ENCODE measurements at regions of chr1 and their contacts with region 1.

Region 1: GRCh38 chr1:7680207-7680954 is 90.7 kb upstream of the VAMP3 start:
- DNase-seq: peak in 1 of 2 experiments; percentile 57
- H3K4me3 ChIP-seq: peak overlapping the region; percentile 76
- H3K4me3 Mint-ChIP-seq: peak overlapping the region; percentile 71
- H3K27ac Mint-ChIP-seq: no peak overlapping the region
- H3K4me1 ChIP-seq: no peaks in the 10 kb centered on the region
- H3K4me1 Mint-ChIP-seq: no peaks in the 10 kb centered on the region
- H3K27me3 ChIP-seq: no peaks in the 10 kb centered on the region
- H3K27me3 Mint-ChIP-seq: peaks cover 4% of the 10 kb centered on the region
- CTCF ChIP-seq: no peak

Region 2: DNA sequence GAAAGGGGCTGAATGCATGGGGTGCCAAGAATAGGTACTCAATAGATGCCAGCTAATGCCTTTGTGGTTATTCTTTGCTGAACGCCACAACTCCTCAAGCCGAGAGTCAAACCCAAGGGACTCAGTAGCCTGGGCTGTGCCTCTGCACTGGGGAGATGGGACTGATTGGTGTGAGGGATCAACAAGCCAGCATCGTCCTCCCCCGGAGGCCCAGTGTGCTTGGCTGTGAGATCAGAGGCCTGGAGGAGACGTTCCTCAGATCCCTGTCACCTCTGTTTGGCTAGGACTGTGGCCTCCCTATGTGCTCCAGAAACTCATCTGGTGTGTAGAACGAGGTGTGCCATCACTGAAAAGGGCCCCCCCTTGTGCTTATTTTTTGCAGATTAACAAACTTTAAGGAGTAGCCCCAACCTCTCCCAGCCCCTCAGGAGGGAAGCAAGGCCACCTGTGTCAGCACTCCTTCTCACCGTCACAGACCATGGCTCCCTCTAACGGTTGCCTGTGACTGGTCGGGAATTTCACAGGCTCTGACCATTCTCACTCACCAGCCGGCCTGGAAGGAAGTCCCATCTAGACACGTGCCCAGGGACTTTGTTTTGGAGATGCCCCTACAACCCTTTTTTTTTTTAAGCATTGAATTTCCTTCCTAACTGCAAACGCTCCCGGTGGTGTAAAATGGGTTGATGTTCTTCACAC is 103.3 kb before region 1 on chr1:
- CTCF ChIA-PET with region 1: no interaction called
- POLR2A ChIA-PET with region 1: no interaction called
- intact Hi-C with region 1: no loop called
- DNase-seq: no peak
- H3K4me3 ChIP-seq: no peak overlapping the region
- H3K4me3 Mint-ChIP-seq: no peak overlapping the region
- H3K27ac Mint-ChIP-seq: no peak overlapping the region
- H3K4me1 ChIP-seq: no peaks in the 10 kb centered on the region
- H3K4me1 Mint-ChIP-seq: no peaks in the 10 kb centered on the region
- H3K27me3 ChIP-seq: no peaks in the 10 kb centered on the region
- H3K27me3 Mint-ChIP-seq: peaks cover 9% of the 10 kb centered on the region
- CTCF ChIP-seq: peak in 1 of 2 experiments; percentile 18

Region 3: DNA sequence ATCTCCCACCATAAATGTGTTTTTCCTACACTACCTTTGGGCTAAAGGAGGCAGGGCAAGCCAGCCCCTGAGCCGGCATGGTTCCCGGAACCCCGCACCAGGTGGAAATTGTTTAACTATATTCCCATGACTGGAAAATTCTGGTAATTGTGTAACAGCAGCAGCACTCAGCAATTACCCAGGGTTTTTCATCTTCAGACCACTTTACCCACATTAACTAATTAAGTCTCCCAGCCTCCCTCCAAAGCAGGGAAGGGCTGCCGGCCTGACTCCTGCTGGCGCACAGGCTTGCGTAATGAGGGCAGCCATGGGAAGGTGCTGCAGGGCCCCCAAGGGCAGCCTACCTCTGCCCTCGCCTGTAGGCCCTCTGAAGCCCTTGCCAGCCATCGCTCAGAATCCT is 50.0 kb before region 1 on chr1:
- CTCF ChIA-PET with region 1: no interaction called
- POLR2A ChIA-PET with region 1: no interaction called
- intact Hi-C with region 1: no loop called
- DNase-seq: no peak
- H3K4me3 ChIP-seq: no peak overlapping the region
- H3K4me3 Mint-ChIP-seq: no peak overlapping the region
- H3K27ac Mint-ChIP-seq: no peak overlapping the region
- H3K4me1 ChIP-seq: no peaks in the 10 kb centered on the region
- H3K4me1 Mint-ChIP-seq: no peaks in the 10 kb centered on the region
- H3K27me3 ChIP-seq: no peaks in the 10 kb centered on the region; the same call in none of the 2 replicates
- H3K27me3 Mint-ChIP-seq: peaks cover 45% of the 10 kb centered on the region
- CTCF ChIP-seq: no peak

Region 4: GRCh38 chr1:7704214-7705047 is 24.1 kb after region 1 on chr1:
- CTCF ChIA-PET with region 1: no interaction called
- POLR2A ChIA-PET with region 1: interaction called, 4 read pairs
- intact Hi-C with region 1: loop called (anchors 2 kb)
- DNase-seq: peak; percentile 92 to 97
- H3K4me3 ChIP-seq: peak overlapping the region; percentile 73
- H3K4me3 Mint-ChIP-seq: peak overlapping the region; percentile 69
- H3K27ac Mint-ChIP-seq: no peak overlapping the region
- H3K4me1 ChIP-seq: no peaks in the 10 kb centered on the region
- H3K4me1 Mint-ChIP-seq: peaks cover 13% of the 10 kb centered on the region
- H3K27me3 ChIP-seq: no peaks in the 10 kb centered on the region
- H3K27me3 Mint-ChIP-seq: no peaks in the 10 kb centered on the region
- CTCF ChIP-seq: no peak

Region 5: GRCh38 chr1:7752512-7753417 is 72.4 kb after region 1 on chr1:
- CTCF ChIA-PET with region 1: interaction called, 17 read pairs
- POLR2A ChIA-PET with region 1: no interaction called
- intact Hi-C with region 1: no loop called
- DNase-seq: peak; percentile 43 to 62
- H3K4me3 ChIP-seq: peak overlapping the region; percentile 21; the same call in 1 of the 2 replicates
- H3K4me3 Mint-ChIP-seq: peak overlapping the region; percentile 57
- H3K27ac Mint-ChIP-seq: no peak overlapping the region
- H3K4me1 ChIP-seq: no peaks in the 10 kb centered on the region
- H3K4me1 Mint-ChIP-seq: peaks cover 7% of the 10 kb centered on the region
- H3K27me3 ChIP-seq: no peaks in the 10 kb centered on the region
- H3K27me3 Mint-ChIP-seq: no peaks in the 10 kb centered on the region
- CTCF ChIP-seq: peak; percentile 65 to 75

Measured in Caco-2 (cell line).